ENCODE measurements at regions of chr21 and their contacts with region 1.

Region 1: GRCh38 chr21:43805275-43805800 is 16.0 kb downstream of the RRP1 start:
- DNase-seq: no peak
- ATAC-seq: no peak

Region 2: GRCh38 chr21:43916691-43917514 is 111.6 kb after region 1 on chr21:
- intact Hi-C with region 1: no loop called
- DNase-seq: no peak
- ATAC-seq: peak; percentile 62 to 73

Region 3: DNA sequence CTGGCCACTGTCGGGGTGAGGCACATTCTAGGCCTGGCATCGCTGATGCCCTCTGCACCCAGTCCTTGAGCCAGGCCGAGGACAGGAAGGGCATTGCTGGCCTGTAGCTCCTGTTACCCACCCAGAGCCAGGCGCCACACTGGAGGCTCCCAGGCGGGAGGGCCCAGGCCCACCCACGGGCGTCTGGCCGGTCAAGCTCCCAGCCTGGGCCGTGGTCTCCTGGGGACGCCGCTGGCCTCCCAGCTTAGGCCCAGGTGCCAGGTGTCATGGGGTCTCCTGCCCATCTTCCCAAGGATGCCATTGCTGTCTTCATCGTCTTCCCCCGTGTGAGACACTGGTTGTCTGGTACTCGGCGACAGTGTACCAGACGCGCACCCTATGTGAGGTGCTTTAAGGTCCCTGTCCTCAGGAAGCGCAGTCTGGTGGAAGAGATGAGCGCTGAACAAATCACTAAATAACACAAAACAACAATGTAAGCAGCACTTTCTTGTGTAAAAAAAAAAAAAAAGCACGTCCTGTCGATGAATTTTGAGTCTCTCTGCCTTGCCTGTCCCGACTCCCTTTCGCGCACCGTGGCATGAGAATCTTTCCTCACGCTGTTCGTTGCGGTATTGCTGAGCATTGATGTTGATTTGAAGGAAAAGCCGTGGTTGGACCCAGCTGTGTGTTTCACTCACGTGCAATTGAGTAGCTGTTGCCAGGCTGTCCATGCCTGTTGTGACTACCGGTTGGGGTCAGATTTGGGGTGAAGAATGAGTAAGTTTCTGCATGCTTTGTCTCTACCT is 179.8 kb after region 1 on chr21:
- intact Hi-C with region 1: loop called in 1 of 2 experiments (anchors 10 kb)
- DNase-seq: no peak
- ATAC-seq: no peak

Measured in left cardiac atrium (tissue), 4 donors.